CD4-positive, alpha-beta memory T cell (primary cell): ENCODE measurements at regions of chr14 and their contacts with region 1.

Region 1: DNA sequence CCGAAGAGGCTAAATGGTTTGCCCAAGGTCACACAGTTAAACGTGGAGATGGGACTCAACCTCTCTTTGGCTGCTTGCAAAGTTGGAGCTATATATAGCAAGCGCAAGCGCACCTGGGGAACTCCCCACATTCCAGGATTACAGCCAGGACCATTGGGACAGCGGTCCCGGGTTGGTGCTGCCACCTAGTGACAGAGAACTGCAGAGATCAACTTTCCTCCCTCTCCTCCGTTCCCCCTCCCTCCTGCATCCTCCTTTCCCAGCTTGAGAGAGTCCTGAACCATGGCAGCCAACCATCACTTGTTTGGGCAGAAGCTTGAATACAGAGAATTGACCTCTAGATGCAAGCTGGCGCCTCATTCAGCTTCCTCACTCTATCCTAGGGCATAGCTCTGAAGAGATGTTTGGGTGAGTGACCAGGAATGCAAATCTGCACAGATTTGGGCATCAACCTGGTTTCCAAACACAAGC is 17.4 kb upstream of the FLVCR2 start:
- DNase-seq: peak in 4 of 5 donors; percentile 21 to 40 (median 37)
- H3K4me3 ChIP-seq: no peak overlapping the region
- H3K4me3 Mint-ChIP-seq: peak overlapping the region in 4 of 8 donors; percentile 21 to 62 (median 50)
- H3K27ac ChIP-seq: no peak overlapping the region
- H3K27ac Mint-ChIP-seq: peak overlapping the region in 4 of 7 donors; percentile 13 to 67 (median 48)
- H3K4me1 ChIP-seq: peaks cover 26% of the 10 kb centered on the region
- H3K4me1 Mint-ChIP-seq: peaks cover 21 to 46% (median 28%) of the 10 kb centered on the region in 4 donors
- H3K27me3 ChIP-seq: no peaks in the 10 kb centered on the region
- H3K27me3 Mint-ChIP-seq: peaks cover 0 to 1% of the 10 kb centered on the region in 2 donors

Region 2: DNA sequence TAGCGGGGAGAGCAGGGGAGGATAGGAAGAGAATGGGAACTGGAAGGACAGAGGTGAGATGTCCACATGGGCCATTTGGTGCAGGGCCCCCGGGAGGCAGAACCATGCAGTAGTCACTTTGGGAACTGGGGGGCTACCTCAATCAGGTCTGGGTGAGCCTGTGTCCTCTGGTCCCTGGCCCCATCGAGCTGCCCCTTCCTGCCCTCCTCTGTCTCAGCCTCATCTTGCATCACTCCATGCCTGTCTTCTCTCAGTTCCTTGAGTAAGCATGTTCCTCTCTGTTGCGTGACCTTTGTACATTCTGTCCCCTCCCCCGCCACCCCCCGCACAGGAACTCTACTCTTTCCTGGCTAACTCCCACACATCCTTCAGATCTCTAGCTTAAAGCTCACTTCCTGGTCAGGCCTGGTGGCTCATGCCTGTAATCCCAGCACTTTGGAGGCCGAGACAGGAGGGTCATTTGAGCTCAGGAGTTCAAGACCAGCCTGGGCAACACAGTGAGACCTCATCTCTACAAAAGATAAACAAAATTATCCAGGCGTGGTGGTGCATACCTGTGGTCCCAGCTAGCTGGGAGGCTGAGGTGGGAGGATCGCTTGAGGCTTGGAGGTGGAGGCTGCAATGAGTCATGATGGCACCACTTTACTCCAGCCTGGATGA is 259.2 kb before region 1 on chr14:
- CTCF ChIA-PET with region 1: interaction called, 13 read pairs
- POLR2A ChIA-PET with region 1: no interaction called
- intact Hi-C with region 1: no loop called
- DNase-seq: no peak
- H3K4me3 ChIP-seq: no peak overlapping the region
- H3K4me3 Mint-ChIP-seq: no peak overlapping the region
- H3K27ac ChIP-seq: no peak overlapping the region
- H3K27ac Mint-ChIP-seq: peak overlapping the region in 2 of 7 donors; percentile 39 to 46
- H3K4me1 ChIP-seq: peaks cover 8% of the 10 kb centered on the region
- H3K4me1 Mint-ChIP-seq: peaks cover 3 to 23% (median 10%) of the 10 kb centered on the region in 4 donors
- H3K27me3 ChIP-seq: no peaks in the 10 kb centered on the region
- H3K27me3 Mint-ChIP-seq: peaks cover 0 to 2% of the 10 kb centered on the region in 2 donors

Region 3: DNA sequence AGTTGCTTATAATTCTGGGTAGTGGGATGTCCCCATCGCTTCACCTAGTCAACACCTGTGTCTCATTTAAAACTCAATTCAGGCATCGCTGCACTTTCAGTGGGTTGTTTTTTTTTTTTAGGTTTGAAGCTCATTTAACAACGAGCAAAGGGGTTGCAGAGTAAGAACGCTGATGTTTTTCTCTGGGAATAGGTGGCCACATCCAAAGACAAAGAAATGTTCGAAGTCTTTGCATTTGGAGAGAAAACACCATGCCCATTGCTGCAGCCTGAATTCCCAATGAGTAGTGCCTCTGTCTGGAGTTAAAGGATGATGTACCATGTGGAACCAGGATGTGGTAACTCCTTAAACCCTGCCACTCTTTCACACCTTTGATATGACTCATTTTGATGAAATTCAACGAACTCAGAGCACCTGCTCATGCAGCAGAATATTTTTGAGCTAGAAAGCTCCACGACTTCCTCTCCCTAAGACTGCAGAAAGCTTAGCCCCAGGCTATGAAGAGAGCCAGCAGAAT is 73.8 kb before region 1 on chr14:
- CTCF ChIA-PET with region 1: interaction called, 101 read pairs
- POLR2A ChIA-PET with region 1: interaction called, 3 read pairs
- intact Hi-C with region 1: loop called (anchors 1 kb)
- DNase-seq: peak; percentile 6 to 50 (median 16)
- H3K4me3 ChIP-seq: no peak overlapping the region
- H3K4me3 Mint-ChIP-seq: peak overlapping the region in 3 of 8 donors; percentile 11 to 59 (median 32)
- H3K27ac ChIP-seq: no peak overlapping the region
- H3K27ac Mint-ChIP-seq: peak overlapping the region in 2 of 7 donors; percentile 33 to 57
- H3K4me1 ChIP-seq: peaks cover 14% of the 10 kb centered on the region
- H3K4me1 Mint-ChIP-seq: peaks cover 8 to 20% (median 15%) of the 10 kb centered on the region in 4 donors
- H3K27me3 ChIP-seq: no peaks in the 10 kb centered on the region
- H3K27me3 Mint-ChIP-seq: no peaks in the 10 kb centered on the region

Region 4: DNA sequence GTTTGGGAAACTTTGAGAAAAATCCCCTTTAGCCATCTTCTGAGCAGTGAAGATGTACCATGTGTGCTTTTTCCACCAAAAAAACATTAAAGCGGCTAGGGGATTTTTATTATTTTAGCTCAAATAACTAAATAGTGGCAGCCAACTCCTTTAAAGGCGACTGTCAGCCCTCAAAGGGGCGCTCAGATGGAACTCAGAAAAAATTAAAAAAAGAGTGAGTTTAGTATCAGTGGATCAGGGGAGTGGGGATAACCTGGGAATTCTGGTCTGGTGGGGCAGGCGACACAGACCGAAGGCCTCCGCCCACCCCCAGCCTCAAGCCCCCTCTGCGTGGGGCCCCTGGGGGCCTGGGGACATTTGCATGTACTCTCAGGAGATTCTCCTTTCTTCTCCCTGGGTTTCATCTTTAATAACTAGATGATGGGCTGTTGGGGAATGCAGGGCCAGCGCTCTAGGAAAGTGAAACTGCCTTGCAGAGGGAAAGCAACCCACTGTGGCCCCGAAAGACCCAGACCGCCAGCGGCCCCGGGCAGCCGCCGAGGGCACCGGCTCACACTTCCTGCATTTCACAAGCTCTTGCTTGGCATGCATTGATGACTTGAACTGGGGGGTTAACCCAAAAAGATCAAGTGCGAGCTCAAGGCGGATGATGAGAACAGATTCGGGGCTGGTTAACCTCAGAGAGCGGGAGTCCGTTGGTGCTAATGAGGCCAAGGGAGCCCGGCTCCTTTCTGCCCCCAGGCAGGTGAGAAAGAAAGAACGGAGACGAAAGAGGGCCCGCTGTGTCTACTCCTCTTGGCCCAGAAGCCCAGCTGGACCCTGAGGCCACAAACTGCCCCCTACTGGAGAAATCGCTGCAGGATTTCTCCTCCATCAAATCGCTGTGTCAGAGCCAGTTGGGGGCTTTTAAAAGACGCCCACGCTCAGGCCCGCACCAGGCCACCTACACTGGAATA is 46.0 kb before region 1 on chr14:
- CTCF ChIA-PET with region 1: interaction called, 105 read pairs
- POLR2A ChIA-PET with region 1: interaction called, 10 read pairs
- intact Hi-C with region 1: loop called (anchors 1 kb)
- DNase-seq: peak; percentile 59 to 70 (median 63)
- H3K4me3 ChIP-seq: peak overlapping the region; percentile 45 to 49
- H3K4me3 Mint-ChIP-seq: peak overlapping the region; percentile 88 to 97 (median 94)
- H3K27ac ChIP-seq: peak overlapping the region; percentile 73
- H3K27ac Mint-ChIP-seq: peak overlapping the region; percentile 87 to 99 (median 97)
- H3K4me1 ChIP-seq: peaks cover 33% of the 10 kb centered on the region
- H3K4me1 Mint-ChIP-seq: peaks cover 22 to 51% (median 33%) of the 10 kb centered on the region in 4 donors
- H3K27me3 ChIP-seq: no peaks in the 10 kb centered on the region
- H3K27me3 Mint-ChIP-seq: no peaks in the 10 kb centered on the region

Region 5: GRCh38 chr14:75531660-75532317 is 29.2 kb before region 1 on chr14:
- CTCF ChIA-PET with region 1: interaction called, 43 read pairs
- POLR2A ChIA-PET with region 1: interaction called, 3 read pairs
- intact Hi-C with region 1: no loop called
- DNase-seq: no peak
- H3K4me3 ChIP-seq: no peak overlapping the region
- H3K4me3 Mint-ChIP-seq: peak overlapping the region in 4 of 8 donors; percentile 33 to 64 (median 44)
- H3K27ac ChIP-seq: peak overlapping the region; percentile 40
- H3K27ac Mint-ChIP-seq: peak overlapping the region; percentile 44 to 93 (median 81)
- H3K4me1 ChIP-seq: peaks cover 72% of the 10 kb centered on the region
- H3K4me1 Mint-ChIP-seq: peaks cover 53 to 73% (median 65%) of the 10 kb centered on the region in 4 donors
- H3K27me3 ChIP-seq: no peaks in the 10 kb centered on the region
- H3K27me3 Mint-ChIP-seq: no peaks in the 10 kb centered on the region